A549 (cell line): ENCODE measurements at regions of chr19 and their contacts with region 1.

Region 1: DNA sequence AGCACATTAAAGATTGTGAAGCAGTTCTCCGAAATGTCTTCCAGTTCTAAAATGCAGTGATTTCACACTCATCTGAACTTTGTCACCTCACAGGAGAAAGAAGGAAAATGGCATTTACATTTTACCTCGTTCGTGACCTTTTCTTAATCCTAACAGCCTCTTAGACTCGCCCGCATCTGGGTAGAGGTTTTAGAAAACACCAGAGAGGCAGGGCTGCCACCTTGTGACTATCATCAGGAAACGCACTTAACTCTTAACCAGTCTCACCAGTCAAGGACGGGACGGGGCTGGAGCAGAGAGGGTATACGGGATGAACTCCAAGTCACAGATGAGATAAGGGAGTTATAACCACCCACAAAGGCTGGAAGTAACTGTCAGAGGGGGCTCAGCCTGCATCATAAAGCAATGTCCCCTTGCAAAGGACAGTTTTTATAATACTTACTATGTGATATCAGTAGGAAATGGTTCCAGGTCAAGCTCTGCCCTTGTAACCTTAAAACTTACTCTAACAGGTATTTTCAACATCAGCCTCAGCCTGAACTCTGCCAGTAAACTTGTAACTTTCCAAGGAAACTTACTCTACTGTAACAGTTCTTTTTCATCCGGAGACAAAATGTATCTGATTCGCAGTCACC is 8.6 kb upstream of the CEACAM6 start:
- DNase-seq: peak; percentile 84 to 87
- ATAC-seq: peak; percentile 90 to 98
- H3K4me3 ChIP-seq: no peak overlapping the region
- H3K27ac ChIP-seq: no peak overlapping the region
- H3K4me1 ChIP-seq: no peaks in the 10 kb centered on the region
- CTCF ChIP-seq: peak; percentile 96
- EP300 ChIP-seq: no peak
- POLR2A ChIP-seq: no peak
- RAD21 ChIP-seq: peak; percentile 94 to 96

Region 2: DNA sequence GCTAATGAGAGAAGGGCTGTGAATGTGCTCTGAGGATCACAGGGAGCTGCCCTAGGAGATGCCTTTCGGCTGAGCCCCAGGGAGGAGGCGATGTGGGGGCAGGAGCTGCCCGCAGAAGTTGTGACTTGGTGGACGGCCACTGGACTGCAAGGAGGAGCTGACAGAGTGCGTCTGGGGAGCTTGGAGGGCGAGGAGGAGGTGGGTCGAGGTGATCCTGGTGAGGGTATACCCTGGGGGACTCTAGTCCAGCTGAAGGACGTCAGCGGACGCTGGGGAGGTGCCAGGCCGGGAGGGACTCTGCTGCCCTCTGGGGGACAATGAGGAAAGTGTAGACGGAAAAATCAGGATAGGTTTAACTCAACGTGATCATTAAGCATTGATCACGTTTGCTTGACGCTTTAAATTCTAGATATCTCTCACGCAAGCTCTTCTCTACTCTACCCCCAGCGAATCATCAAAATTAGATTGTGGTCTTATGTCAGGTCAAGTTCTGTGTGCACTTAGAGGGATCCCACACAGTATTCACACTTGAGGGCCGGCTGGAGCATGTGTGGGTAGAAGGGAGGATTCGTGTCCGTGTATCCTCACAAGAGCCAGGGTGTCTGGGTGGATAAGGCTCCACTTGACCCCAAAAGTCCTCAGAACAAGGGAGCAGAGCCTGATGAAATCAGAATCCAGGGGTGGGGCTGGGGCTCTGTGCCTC is 55.3 kb before region 1 on chr19:
- CTCF ChIA-PET with region 1: interaction called, 48 read pairs
- POLR2A ChIA-PET with region 1: no interaction called
- DNase-seq: peak; percentile 42 to 76
- ATAC-seq: peak; percentile 72 to 88
- H3K4me3 ChIP-seq: no peak overlapping the region
- H3K27ac ChIP-seq: no peak overlapping the region
- H3K4me1 ChIP-seq: no peaks in the 10 kb centered on the region
- CTCF ChIP-seq: peak; percentile 77
- EP300 ChIP-seq: no peak
- POLR2A ChIP-seq: no peak
- RAD21 ChIP-seq: peak; percentile 51 to 67; a peak in 4 of 5 replicates

Region 3: DNA sequence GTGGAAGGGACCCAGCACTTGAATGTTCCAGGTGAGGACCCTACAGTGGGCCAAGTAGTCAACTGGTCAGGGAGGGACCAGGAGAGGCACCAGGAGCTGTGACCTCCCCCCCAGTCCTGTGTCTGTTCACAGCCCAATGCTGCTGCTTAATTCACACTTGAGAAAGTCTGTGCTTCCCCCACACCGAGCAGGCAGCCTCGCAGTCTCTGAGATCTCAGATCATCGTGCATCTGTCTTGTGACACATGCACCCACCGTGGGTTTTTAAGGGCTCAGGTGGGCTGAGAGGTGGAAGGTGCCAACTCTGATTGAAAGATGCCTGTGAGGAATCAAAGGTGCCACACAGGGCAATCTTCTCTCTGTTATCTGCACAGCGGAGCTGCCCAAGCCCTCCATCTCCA is 32.1 kb before region 1 on chr19:
- CTCF ChIA-PET with region 1: interaction called, 23 read pairs
- POLR2A ChIA-PET with region 1: no interaction called
- DNase-seq: no peak
- ATAC-seq: no peak
- H3K4me3 ChIP-seq: no peak overlapping the region
- H3K27ac ChIP-seq: no peak overlapping the region
- H3K4me1 ChIP-seq: no peaks in the 10 kb centered on the region
- CTCF ChIP-seq: no peak
- EP300 ChIP-seq: no peak
- POLR2A ChIP-seq: no peak
- RAD21 ChIP-seq: no peak

Region 4: GRCh38 chr19:41734617-41735016 is 12.1 kb before region 1 on chr19:
- CTCF ChIA-PET with region 1: interaction called, 107 read pairs
- POLR2A ChIA-PET with region 1: no interaction called
- DNase-seq: no peak
- ATAC-seq: peak in 1 of 2 experiments; percentile 26; a peak in 2 of 6 replicates
- H3K4me3 ChIP-seq: no peak overlapping the region
- H3K27ac ChIP-seq: no peak overlapping the region
- H3K4me1 ChIP-seq: no peaks in the 10 kb centered on the region
- CTCF ChIP-seq: no peak
- EP300 ChIP-seq: no peak
- POLR2A ChIP-seq: no peak
- RAD21 ChIP-seq: no peak

Region 5: DNA sequence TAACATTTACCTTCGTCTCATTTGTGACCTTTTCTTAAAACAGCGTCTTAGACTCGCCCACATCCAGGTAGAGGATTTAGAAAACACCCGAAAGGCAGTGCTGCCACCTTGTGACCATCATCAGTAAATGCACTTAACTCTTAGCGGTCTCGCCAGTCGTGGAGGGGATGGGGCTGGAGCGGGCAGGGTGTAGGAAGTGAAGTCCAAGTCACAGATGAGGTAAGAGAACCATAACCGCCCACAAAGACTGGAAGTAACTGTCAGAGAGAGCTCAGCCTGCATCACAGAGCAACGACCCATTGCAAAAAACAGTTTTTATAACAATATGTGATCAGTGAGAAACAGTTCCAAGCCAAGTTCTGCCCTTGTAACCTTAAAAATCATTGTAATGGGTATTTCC is 38.9 kb after region 1 on chr19:
- CTCF ChIA-PET with region 1: interaction called, 474 read pairs
- POLR2A ChIA-PET with region 1: no interaction called
- DNase-seq: peak; percentile 93 to 99
- ATAC-seq: peak; percentile 74 to 92
- H3K4me3 ChIP-seq: no peak overlapping the region
- H3K27ac ChIP-seq: no peak overlapping the region
- H3K4me1 ChIP-seq: peaks cover 5% of the 10 kb centered on the region; the same call in 1 of the 3 replicates
- CTCF ChIP-seq: peak; percentile 99
- EP300 ChIP-seq: no peak
- POLR2A ChIP-seq: no peak
- RAD21 ChIP-seq: peak; percentile 80 to 88

Region 6: DNA sequence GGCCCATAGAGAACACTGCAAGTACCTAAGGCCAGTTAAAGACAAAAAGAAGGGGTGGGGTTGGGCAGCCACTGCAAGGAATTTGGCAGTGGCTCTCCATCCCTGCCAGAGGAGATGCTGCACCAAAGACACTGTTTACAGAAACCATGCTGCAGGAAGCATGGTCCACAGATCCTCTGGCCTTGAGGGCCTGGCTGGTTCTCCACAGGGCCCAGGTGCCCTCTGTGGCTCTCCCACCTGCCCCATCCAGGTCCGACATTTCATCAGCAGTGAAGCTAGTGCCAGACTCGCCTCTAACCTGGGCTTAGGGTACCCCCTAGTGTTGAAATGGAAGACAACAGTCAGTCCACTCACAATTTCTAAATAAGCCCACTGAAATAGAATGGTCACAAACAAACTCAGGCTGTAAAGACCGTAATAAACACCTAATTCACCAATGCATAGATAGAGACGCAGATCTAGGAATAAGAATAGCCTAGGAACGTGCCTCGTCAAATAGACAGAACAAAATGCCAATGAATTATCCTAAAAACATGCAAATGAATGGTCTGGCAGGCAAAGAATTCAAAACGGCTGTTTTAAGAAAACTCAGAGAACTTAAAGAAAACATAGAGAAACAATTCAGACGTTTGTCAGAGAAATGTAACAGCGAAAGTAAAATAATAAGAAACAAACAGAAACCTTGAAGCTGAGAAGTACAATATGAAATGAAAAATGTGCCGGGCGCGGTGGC is 74.5 kb after region 1 on chr19:
- CTCF ChIA-PET with region 1: interaction called, 111 read pairs
- POLR2A ChIA-PET with region 1: no interaction called
- DNase-seq: peak; percentile 82 to 94
- ATAC-seq: peak; percentile 92 to 96
- H3K4me3 ChIP-seq: no peak overlapping the region
- H3K27ac ChIP-seq: no peak overlapping the region
- H3K4me1 ChIP-seq: no peaks in the 10 kb centered on the region
- CTCF ChIP-seq: peak; percentile 91
- EP300 ChIP-seq: no peak
- POLR2A ChIP-seq: no peak
- RAD21 ChIP-seq: peak; percentile 86 to 96

Region 7: GRCh38 chr19:41978470-41978869 is 231.8 kb after region 1 on chr19:
- CTCF ChIA-PET with region 1: no interaction called
- POLR2A ChIA-PET with region 1: no interaction called
- DNase-seq: no peak
- ATAC-seq: no peak
- H3K4me3 ChIP-seq: no peak overlapping the region
- H3K27ac ChIP-seq: no peak overlapping the region
- H3K4me1 ChIP-seq: no peaks in the 10 kb centered on the region
- CTCF ChIP-seq: no peak
- EP300 ChIP-seq: no peak
- POLR2A ChIP-seq: no peak
- RAD21 ChIP-seq: no peak